Activated CD8-positive, alpha-beta T cell treated with anti-CD3 and anti-CD28 coated beads for 36 hours (primary cell): ENCODE measurements at regions of chr1 and their contacts with region 1.

Region 1: GRCh38 chr1:26417111-26417759 is 6.6 kb downstream of the LIN28A start:
- DNase-seq: peak; percentile 93
- ATAC-seq: peak; percentile 100
- H3K4me3 Mint-ChIP-seq: no peak overlapping the region
- H3K27ac Mint-ChIP-seq: no peak overlapping the region
- H3K4me1 Mint-ChIP-seq: no peaks in the 10 kb centered on the region
- H3K27me3 Mint-ChIP-seq: peaks cover 24% of the 10 kb centered on the region
- CTCF ChIP-seq: peak; percentile 82

Region 2: DNA sequence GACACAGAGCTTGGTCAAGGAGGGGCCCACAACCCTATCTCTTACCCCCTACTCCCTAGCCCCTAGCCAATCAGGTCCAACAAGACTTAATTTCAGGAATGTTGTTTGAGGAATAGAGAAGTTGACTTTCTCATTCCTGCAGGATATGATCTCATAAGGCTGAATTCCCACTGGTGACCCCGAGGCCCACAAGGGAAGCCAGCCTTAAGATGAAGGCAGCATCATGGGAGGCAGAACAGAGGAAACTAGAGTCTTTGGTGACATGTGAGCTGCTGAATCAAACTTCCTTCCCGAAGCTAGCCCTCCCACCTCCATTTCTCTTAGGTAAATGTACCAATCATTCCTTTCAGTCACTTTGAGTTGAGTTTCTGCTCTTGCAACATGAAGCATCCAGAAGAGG is 314.7 kb before region 1 on chr1:
- CTCF ChIA-PET with region 1: interaction called, 11 read pairs
- POLR2A ChIA-PET with region 1: interaction called, 3 read pairs
- intact Hi-C with region 1: no loop called
- DNase-seq: no peak
- ATAC-seq: no peak
- H3K4me3 Mint-ChIP-seq: no peak overlapping the region
- H3K27ac Mint-ChIP-seq: no peak overlapping the region
- H3K4me1 Mint-ChIP-seq: peaks cover 3% of the 10 kb centered on the region
- H3K27me3 Mint-ChIP-seq: peaks cover 2% of the 10 kb centered on the region
- CTCF ChIP-seq: no peak

Region 3: GRCh38 chr1:26233903-26234643 is 183.2 kb before region 1 on chr1 and contains the start of gene CEP85:
- CTCF ChIA-PET with region 1: interaction called, 32 read pairs
- POLR2A ChIA-PET with region 1: no interaction called
- intact Hi-C with region 1: no loop called
- DNase-seq: peak; percentile 99
- ATAC-seq: peak; percentile 94
- H3K4me3 Mint-ChIP-seq: peak within 1 kb of the TSS; percentile 98
- H3K27ac Mint-ChIP-seq: peak within 1 kb of the TSS; percentile 92
- H3K4me1 Mint-ChIP-seq: peaks cover 27% of the 10 kb centered on the region
- H3K27me3 Mint-ChIP-seq: no peaks in the 10 kb centered on the region
- CTCF ChIP-seq: peak; percentile 26
- total RNA-seq, gene CEP85: 32.8 to 33.7 TPM

Region 4: DNA sequence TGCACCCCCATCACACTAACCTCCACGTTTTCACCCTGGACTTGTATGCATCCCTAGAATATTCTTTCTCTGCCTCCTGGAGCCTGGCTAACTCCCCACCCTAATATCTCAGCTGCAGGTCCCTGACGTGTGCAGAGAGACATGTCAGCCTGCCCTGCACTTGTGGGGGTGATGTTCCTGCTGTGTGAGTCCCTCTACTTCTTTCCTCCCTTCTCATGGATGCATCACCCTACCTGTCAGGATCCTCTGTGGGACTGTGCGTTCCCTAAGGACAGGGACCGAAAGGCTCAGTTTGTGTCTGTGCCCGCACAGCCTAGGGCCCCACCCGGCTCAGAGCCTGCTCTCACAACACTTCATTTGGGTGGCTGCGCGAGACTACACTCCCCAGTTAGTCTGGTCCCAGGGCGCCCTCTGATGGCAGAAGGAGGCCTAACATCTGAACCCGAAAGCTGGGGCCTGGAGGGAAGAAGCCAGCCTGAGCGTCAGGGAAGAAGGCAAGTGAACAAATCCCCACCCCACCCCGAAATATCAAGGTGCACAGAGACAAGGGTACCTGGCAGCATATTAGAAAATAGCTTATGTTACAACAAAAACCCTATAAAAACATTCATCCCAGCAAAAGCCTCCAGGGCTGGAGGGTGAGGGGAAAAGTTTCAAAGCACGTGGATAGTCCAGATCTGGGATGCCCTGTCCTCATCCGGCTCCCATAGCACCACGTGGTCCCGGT is 95.8 kb before region 1 on chr1:
- CTCF ChIA-PET with region 1: interaction called, 37 read pairs
- POLR2A ChIA-PET with region 1: interaction called, 3 read pairs
- intact Hi-C with region 1: no loop called
- DNase-seq: peak; percentile 98
- ATAC-seq: peak; percentile 62
- H3K4me3 Mint-ChIP-seq: peak overlapping the region; percentile 93
- H3K27ac Mint-ChIP-seq: peak overlapping the region; percentile 94
- H3K4me1 Mint-ChIP-seq: peaks cover 49% of the 10 kb centered on the region
- H3K27me3 Mint-ChIP-seq: no peaks in the 10 kb centered on the region
- CTCF ChIP-seq: peak; percentile 94

Region 5: DNA sequence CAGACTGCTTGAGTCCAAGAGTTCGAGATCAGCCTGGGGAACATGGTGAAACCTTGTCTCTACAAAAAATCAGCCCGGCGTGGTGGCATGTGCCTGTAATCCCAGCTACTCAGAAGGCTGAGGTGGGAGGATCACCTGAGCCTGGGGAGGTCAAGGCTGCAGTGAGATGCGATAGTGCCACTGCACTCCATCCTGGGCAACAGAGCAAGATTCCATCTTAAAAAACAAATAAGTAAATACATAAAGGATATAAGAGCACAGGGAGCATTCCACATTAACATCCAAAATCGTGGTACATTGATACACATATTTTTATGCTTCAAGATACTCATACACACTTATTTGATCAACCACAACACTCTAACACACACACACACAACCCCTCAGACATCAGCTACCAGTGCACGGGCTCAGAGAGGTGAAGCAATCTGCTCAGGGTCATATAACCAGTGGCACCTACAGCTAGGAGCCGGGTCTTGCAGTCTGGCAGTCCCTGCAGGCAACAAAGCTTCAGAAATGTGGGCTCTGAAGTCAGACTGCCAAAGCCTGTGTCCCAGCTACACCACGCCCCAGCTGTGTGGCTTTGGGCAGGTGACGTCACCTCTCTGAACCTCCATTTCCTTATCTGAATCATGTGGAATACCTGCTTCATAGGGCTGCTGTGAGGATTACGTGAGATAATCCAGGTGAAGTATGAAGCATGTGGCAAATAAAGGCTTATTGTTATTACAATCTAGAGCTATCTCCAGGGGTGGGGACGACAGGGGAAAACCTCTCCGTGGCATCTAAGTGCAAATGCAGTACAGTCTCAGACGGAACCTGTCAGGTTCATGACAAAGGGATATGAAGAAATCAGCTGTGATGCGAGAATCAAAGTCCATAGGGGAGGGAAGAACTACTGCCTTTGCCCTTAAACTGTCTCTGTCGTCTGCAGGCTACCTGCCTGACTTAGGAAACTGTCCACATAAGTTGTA is 58.5 kb before region 1 on chr1:
- CTCF ChIA-PET with region 1: interaction called, 53 read pairs
- POLR2A ChIA-PET with region 1: interaction called, 4 read pairs
- intact Hi-C with region 1: no loop called
- DNase-seq: peak; percentile 88
- ATAC-seq: peak; percentile 79
- H3K4me3 Mint-ChIP-seq: peak overlapping the region; percentile 60
- H3K27ac Mint-ChIP-seq: peak overlapping the region; percentile 13
- H3K4me1 Mint-ChIP-seq: peaks cover 35% of the 10 kb centered on the region
- H3K27me3 Mint-ChIP-seq: peaks cover 15% of the 10 kb centered on the region
- CTCF ChIP-seq: no peak

Region 6: GRCh38 chr1:26378088-26378878 is 39.0 kb before region 1 on chr1:
- CTCF ChIA-PET with region 1: interaction called, 24 read pairs
- POLR2A ChIA-PET with region 1: interaction called, 4 read pairs
- intact Hi-C with region 1: no loop called
- DNase-seq: peak; percentile 91
- ATAC-seq: peak; percentile 96
- H3K4me3 Mint-ChIP-seq: peak overlapping the region; percentile 33
- H3K27ac Mint-ChIP-seq: peak overlapping the region; percentile 82
- H3K4me1 Mint-ChIP-seq: peaks cover 59% of the 10 kb centered on the region
- H3K27me3 Mint-ChIP-seq: no peaks in the 10 kb centered on the region
- CTCF ChIP-seq: no peak

Region 7: GRCh38 chr1:26431979-26432695 is 14.9 kb after region 1 on chr1 and contains the start of gene DHDDS:
- CTCF ChIA-PET with region 1: interaction called, 61 read pairs
- POLR2A ChIA-PET with region 1: interaction called, 3 read pairs
- intact Hi-C with region 1: no loop called
- DNase-seq: peak; percentile 98
- ATAC-seq: peak; percentile 98
- H3K4me3 Mint-ChIP-seq: peak within 1 kb of the TSS; percentile 91
- H3K27ac Mint-ChIP-seq: peak within 1 kb of the TSS; percentile 88
- H3K4me1 Mint-ChIP-seq: peaks cover 19% of the 10 kb centered on the region
- H3K27me3 Mint-ChIP-seq: peaks cover 1% of the 10 kb centered on the region
- CTCF ChIP-seq: no peak
- total RNA-seq, gene DHDDS: 33.3 to 36.9 TPM